Activated T-helper 1 cell treated with anti-CD3 and anti-CD28 coated beads, Interleukin-12 subunit alpha, Interleukin-12 subunit beta, Interleukin-2, Interleukin-4 antibody, amounts not matched to agents 30 ng/mL and 10 ng/mL and 1 ng/mL, durations not matched to agents 14 hours and 24 hours and 36 hours (primary cell): ENCODE measurements at regions of chr9 and their contacts with region 1.

Region 1: DNA sequence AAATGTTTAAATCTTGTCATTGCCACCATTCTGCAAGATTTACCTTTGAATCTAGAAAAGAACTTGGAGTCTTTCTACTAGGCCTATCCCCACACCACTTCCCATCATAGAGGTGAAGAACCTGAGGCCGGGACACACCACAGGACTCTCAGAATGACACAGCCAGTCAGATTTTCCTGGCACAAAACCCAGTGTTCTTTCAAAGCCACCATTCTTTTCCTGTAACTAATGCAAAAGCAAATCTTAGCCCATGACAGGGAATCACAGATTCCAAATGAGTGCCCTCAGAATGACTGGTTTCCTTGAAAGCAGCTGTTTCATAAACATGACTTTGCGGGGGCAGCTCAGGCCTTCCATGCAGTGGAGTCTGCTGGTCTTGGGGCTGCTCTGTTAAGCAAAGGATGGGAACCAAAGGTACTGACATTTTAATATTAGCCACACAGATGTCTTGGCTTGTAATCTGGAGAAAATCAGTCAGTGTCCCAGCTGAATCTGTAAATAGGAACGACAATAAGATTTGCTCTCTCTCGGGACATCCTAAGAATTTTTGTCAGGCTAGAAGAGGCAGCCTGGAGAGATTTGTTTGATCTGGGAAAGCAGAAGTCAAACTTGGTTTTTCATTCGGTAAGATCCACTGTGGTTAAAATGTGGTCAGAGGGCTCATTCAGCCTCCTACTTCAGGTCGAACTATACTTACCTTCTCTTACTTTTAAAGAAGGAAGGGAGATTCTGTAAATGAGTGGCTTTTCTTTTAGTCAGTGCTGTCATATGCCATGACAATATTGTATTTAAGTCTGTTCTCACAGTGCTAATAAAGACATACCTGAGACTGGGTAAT is 115.1 kb downstream of the PALM2AKAP2 start:
- DNase-seq: peak; percentile 58
- H3K4me3 Mint-ChIP-seq: peak overlapping the region; percentile 56
- H3K27ac Mint-ChIP-seq: peak overlapping the region; percentile 94
- H3K4me1 Mint-ChIP-seq: peaks cover 74% of the 10 kb centered on the region
- H3K27me3 Mint-ChIP-seq: no peaks in the 10 kb centered on the region

Region 2: GRCh38 chr9:109463924-109464625 is 431.1 kb before region 1 on chr9:
- intact Hi-C with region 1: loop called (anchors 2 kb)
- DNase-seq: peak; percentile 29
- H3K4me3 Mint-ChIP-seq: no peak overlapping the region
- H3K27ac Mint-ChIP-seq: peak overlapping the region; percentile 88
- H3K4me1 Mint-ChIP-seq: peaks cover 71% of the 10 kb centered on the region
- H3K27me3 Mint-ChIP-seq: peaks cover 1% of the 10 kb centered on the region

Region 3: DNA sequence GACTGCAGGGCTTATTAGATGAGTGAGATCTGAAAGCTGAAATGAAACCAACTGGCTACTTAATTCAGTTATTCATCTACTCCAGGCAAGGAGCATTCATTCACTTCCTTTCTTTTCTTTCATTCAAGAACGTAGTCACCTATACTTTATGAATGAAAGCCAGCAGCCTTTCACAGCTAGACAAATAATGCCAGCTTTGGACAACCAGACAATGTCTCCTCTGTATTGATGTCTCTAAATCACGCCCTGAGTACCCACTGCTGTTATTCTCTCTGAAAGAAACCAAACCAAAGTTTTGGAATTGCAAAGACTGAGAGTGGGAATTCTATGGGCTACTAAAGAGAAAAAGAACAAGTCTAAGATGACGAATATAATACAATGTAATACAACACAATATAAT is 275.8 kb before region 1 on chr9:
- intact Hi-C with region 1: no loop called
- DNase-seq: no peak
- H3K4me3 Mint-ChIP-seq: no peak overlapping the region
- H3K27ac Mint-ChIP-seq: no peak overlapping the region
- H3K4me1 Mint-ChIP-seq: no peaks in the 10 kb centered on the region
- H3K27me3 Mint-ChIP-seq: peaks cover 2% of the 10 kb centered on the region

Region 4: GRCh38 chr9:109918339-109919163 is 23.4 kb after region 1 on chr9:
- intact Hi-C with region 1: loop called (anchors 1 kb)
- DNase-seq: peak; percentile 44
- H3K4me3 Mint-ChIP-seq: peak overlapping the region; percentile 75
- H3K27ac Mint-ChIP-seq: peak overlapping the region; percentile 97
- H3K4me1 Mint-ChIP-seq: peaks cover 64% of the 10 kb centered on the region
- H3K27me3 Mint-ChIP-seq: no peaks in the 10 kb centered on the region

Region 5: GRCh38 chr9:109934857-109935215 is 39.7 kb after region 1 on chr9:
- intact Hi-C with region 1: loop called (anchors 2 kb)
- DNase-seq: no peak
- H3K4me3 Mint-ChIP-seq: peak overlapping the region; percentile 45
- H3K27ac Mint-ChIP-seq: peak overlapping the region; percentile 85
- H3K4me1 Mint-ChIP-seq: peaks cover 57% of the 10 kb centered on the region
- H3K27me3 Mint-ChIP-seq: no peaks in the 10 kb centered on the region

Region 6: DNA sequence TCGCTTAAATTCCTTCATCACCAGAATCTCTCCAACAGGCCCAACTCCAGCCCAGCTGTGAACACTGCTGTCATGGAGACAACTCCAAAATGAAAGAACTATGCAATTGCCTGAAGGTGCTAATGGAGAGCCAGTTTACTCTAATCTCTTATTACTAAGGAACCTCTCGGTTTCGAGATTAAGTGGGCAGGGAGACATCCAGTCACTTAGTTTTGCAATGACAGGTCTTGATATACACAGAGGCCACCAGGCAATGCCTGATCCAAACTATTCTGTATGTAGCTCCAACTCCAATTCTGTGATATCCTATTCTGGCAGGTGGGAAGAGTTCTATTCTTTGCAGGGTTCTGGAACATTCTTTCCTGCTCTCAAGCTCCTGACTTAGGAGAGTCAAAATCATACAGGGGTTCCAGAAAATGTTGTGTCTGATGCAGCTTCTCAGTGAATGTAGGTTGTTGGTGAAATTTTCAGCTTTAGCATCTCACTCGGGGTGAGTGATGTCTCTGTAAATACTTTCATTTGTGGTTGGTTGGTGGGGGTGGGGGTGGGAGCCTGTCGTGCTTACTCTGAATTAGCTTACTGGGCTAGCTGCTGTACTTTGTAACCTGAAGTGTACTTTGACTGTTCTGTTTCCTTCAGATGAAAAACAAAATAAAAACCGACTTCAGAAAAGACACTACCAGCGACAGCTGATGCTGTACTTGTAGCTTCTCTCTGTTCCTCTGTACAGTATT is 55.7 kb after region 1 on chr9:
- intact Hi-C with region 1: loop called (anchors 1 kb)
- DNase-seq: no peak
- H3K4me3 Mint-ChIP-seq: peak overlapping the region; percentile 31
- H3K27ac Mint-ChIP-seq: peak overlapping the region; percentile 91
- H3K4me1 Mint-ChIP-seq: peaks cover 42% of the 10 kb centered on the region
- H3K27me3 Mint-ChIP-seq: peaks cover 2% of the 10 kb centered on the region

Region 7: GRCh38 chr9:110048403-110048975 is 153.3 kb after region 1 on chr9:
- intact Hi-C with region 1: loop called (anchors 1 kb)
- DNase-seq: peak; percentile 81
- H3K4me3 Mint-ChIP-seq: peak overlapping the region; percentile 93
- H3K27ac Mint-ChIP-seq: peak overlapping the region; percentile 89
- H3K4me1 Mint-ChIP-seq: peaks cover 58% of the 10 kb centered on the region
- H3K27me3 Mint-ChIP-seq: no peaks in the 10 kb centered on the region

Region 8: DNA sequence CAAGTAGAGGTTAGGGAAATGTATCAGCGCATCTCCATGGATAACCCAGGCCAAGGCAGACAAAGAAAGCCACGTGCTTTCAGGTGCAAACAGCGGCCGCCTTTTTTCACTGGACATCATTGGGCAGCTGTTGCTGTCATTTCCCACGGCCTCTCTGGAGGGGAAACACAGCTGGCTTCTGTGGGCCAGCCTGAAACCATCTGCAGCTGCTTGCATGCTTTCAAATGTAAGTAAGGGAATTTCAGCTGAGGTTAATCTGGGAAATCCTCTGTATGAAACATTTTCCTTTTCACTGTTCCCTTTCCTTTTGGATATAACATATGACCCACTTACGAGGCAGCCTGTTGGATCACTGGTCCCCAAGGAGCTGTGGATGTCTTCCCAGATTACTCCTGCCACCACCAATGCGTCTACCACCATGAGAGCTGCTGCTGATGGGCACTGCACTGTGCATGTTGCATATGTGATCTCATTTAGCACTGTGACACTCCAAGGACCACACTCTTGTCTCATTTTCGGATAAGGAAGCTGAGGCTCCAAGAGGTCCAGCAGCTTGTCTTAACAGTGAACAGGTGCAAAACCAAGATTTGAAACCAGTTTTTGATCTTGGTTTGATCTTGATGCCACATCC is 206.5 kb after region 1 on chr9:
- intact Hi-C with region 1: no loop called
- DNase-seq: no peak
- H3K4me3 Mint-ChIP-seq: no peak overlapping the region
- H3K27ac Mint-ChIP-seq: no peak overlapping the region
- H3K4me1 Mint-ChIP-seq: peaks cover 60% of the 10 kb centered on the region
- H3K27me3 Mint-ChIP-seq: no peaks in the 10 kb centered on the region